ENCODE measurements at regions of chr1 and their contacts with region 1.

Region 1: GRCh38 chr1:212791676-212792395 is at the starts of genes NSL1 and TATDN3:
- DNase-seq: peak; percentile 93 to 95 (median 95)
- H3K4me3 ChIP-seq: peak within 1 kb of the TSS; percentile 84 to 96 (median 92)
- H3K4me3 Mint-ChIP-seq: peak within 1 kb of the TSS; percentile 97 to 100
- H3K27ac ChIP-seq: peak within 1 kb of the TSS; percentile 96 to 98
- H3K27ac Mint-ChIP-seq: peak within 1 kb of the TSS; percentile 97 to 100 (median 98)
- H3K4me1 ChIP-seq: peaks cover 53% of the 10 kb centered on the region in 2 donors
- H3K4me1 Mint-ChIP-seq: peaks cover 38% of the 10 kb centered on the region
- H3K27me3 ChIP-seq: no peaks in the 10 kb centered on the region
- H3K27me3 Mint-ChIP-seq: no peaks in the 10 kb centered on the region
- CTCF ChIP-seq: no peak
- polyA plus RNA-seq, gene NSL1: 16.8 to 80.3 (median 62.3) TPM
- polyA plus RNA-seq, gene TATDN3: 12.1 to 34.3 (median 31.4) TPM

Region 2: DNA sequence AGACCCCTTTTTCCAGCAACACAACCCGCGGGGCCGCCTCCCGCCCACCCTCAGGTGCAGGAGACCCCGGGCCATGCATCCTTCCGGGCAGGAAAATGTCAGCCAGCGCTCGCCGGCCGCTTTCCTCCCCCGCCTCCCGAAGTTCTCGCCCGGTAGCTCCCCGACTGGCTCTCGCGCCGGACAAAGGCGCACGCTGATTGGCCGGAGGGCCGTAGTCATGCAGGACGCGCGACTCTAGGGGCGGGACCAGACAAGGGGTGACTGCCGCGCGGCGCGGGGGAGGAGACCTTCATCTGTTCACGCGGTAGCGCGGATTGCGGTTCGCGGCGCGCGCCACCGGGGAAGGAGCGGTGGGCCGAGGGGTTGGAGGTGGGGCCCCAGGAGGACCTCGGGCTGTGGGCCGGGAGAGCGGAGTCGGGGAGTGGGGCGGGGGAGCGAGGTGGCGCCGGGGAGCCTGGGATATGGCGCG is 66.2 kb after region 1 on chr1 and contains the start of gene FLVCR1:
- intact Hi-C with region 1: loop called (anchors 5 to 10 kb)
- DNase-seq: peak; percentile 91 to 93 (median 91)
- H3K4me3 ChIP-seq: peak within 1 kb of the TSS; percentile 58 to 86 (median 85)
- H3K4me3 Mint-ChIP-seq: peak within 1 kb of the TSS; percentile 96 to 98
- H3K27ac ChIP-seq: peak within 1 kb of the TSS; percentile 75 to 93
- H3K27ac Mint-ChIP-seq: peak within 1 kb of the TSS; percentile 96 to 99 (median 98)
- H3K4me1 ChIP-seq: peaks cover 46 to 51% of the 10 kb centered on the region in 2 donors
- H3K4me1 Mint-ChIP-seq: peaks cover 15% of the 10 kb centered on the region
- H3K27me3 ChIP-seq: no peaks in the 10 kb centered on the region
- H3K27me3 Mint-ChIP-seq: peaks cover 0 to 2% (median 0%) of the 10 kb centered on the region in 3 donors
- CTCF ChIP-seq: no peak
- polyA plus RNA-seq, gene FLVCR1: 1.8 to 5.5 (median 2.8) TPM

Measured in CD14-positive monocyte (primary cell).